ENCODE measurements at regions of chr1 and their contacts with region 1.

Region 1: DNA sequence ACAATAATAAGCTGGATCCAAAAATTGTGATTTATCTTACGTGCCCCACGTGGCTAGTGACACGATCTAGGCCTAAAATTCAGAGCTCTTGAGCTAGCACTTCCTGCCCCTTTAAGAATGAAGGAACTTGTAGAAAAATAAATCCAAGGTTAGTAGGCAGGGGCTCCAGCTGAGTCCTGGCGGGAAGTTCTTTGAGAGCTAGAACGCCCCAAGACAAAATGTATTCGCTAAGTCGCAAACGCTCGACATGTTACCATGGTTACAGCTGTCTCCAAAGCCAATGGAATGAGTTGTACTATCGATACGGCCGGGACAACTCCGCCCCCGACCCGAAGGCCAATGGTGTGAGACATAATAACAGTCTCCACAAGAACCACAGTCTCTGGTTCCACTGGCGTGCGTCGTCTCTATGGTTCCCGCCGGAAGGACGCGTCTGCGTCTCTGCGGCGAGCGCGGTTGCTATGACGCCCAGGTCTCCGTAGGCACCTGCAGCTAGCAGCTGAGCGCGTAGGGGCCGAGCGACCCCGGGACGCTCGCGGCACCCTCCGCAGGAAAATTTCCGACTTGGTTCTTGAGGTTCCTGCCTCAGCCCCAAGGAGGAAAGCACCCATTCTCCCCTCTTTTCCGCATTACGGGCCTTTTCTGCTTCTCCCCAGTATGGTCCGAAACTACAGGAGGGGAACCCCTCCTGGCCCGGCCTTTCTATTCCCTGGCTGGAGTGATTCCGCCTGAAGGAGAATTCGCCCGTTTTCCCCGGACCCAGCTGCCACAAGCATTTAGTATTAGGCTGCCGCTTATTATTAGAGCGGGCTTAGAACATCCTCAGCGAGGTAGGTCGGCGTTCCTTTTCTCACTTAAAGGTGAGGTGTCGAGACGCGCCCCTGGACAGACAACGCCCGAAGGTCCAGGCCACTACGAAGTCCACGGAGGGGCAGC is at the start of gene CCDC30:
- DNase-seq: peak; percentile 94 to 95
- ATAC-seq: peak; percentile 100
- H3K4me3 ChIP-seq: peak within 1 kb of the TSS; percentile 61 to 79 (median 70)
- H3K27ac ChIP-seq: no peak within 1 kb of the TSS
- H3K4me1 ChIP-seq: peaks cover 14 to 16% of the 10 kb centered on the region in 2 donors
- H3K27me3 ChIP-seq: no peaks in the 10 kb centered on the region
- CTCF ChIP-seq: no peak
- POLR2A ChIP-seq: no peak
- total RNA-seq, gene CCDC30: 0.24 to 2.9 (median 0.74) TPM

Region 2: GRCh38 chr1:42186152-42186551 is 276.9 kb before region 1 on chr1:
- in situ Hi-C with region 1: no loop called
- intact Hi-C with region 1: no loop called
- DNase-seq: no peak
- ATAC-seq: no peak
- H3K4me3 ChIP-seq: no peak overlapping the region
- H3K27ac ChIP-seq: no peak overlapping the region
- H3K4me1 ChIP-seq: no peaks in the 10 kb centered on the region
- H3K27me3 ChIP-seq: no peaks in the 10 kb centered on the region
- CTCF ChIP-seq: no peak
- POLR2A ChIP-seq: no peak

Region 3: DNA sequence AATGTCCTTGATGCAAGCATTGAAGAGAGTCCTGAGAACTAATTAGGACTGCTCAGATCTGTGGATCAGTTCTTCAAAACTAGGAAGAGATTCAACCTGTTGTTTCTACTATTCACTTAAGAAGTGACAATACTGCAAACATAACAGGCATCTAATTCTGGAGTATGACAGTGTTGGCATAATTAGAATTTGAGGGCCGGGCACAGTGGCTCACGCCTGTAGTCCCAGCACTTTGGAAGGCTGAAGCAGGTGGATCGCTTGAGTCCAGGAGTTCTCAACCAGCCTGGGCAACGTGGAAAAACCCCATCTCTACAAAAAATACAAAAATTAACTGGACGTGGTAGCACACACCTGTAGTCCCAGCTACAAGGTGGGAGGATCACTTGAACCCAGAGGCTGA is 120.0 kb before region 1 on chr1:
- in situ Hi-C with region 1: no loop called
- intact Hi-C with region 1: loop called (anchors 1 kb)
- DNase-seq: no peak
- ATAC-seq: no peak
- H3K4me3 ChIP-seq: no peak overlapping the region
- H3K27ac ChIP-seq: no peak overlapping the region
- H3K4me1 ChIP-seq: no peaks in the 10 kb centered on the region
- H3K27me3 ChIP-seq: no peaks in the 10 kb centered on the region
- CTCF ChIP-seq: no peak
- POLR2A ChIP-seq: no peak

Region 4: GRCh38 chr1:42657971-42658879 is 195.1 kb after region 1 on chr1 and contains the start of gene PPIH:
- in situ Hi-C with region 1: no loop called
- intact Hi-C with region 1: loop called (anchors 2 kb)
- DNase-seq: peak; percentile 86 to 91
- ATAC-seq: peak; percentile 98 to 99
- H3K4me3 ChIP-seq: peak within 1 kb of the TSS; percentile 80 to 94 (median 89)
- H3K27ac ChIP-seq: peak within 1 kb of the TSS; percentile 82 to 92 (median 89)
- H3K4me1 ChIP-seq: peaks cover 14 to 15% of the 10 kb centered on the region in 2 donors
- H3K27me3 ChIP-seq: no peaks in the 10 kb centered on the region
- CTCF ChIP-seq: peak in 4 of 5 experiments; percentile 31 to 56 (median 47)
- POLR2A ChIP-seq: peak; percentile 50 to 58
- total RNA-seq, gene PPIH: 6.1 to 13.6 (median 7.1) TPM

Region 5: DNA sequence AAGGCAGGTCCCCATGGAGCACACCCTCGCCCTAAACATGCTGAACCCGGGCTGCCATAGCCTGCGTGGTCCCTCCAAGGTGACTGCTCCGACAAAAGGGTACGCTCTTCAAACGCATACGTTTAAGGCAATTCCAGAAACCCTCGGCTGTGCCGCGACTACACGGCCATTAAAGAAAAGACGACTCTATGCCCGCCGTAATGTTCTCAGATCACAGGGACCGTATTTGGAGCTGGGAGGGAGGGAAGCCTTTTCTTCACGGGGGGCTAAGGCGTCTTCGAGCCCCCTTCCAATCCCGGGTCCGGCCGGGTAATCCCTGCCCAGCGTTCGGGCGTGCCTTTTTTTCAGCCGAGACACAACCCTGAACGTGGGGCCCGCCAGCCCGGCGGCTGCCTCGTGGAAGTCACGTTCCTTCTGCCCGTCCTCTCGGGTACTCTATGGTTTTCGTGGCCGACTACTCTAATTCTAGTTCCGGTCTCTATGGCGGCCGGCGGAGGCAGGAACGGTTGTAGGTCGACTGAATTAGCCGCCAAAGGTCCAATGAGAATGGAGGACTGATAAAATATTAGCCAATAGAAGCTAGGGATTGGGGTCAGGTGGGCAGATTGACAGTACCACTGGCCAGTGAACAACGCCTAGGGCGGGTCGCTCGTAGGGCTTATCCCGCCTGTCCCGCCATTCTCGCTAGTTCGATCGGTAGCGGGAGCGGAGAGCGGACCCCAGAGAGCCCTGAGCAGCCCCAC is 218.8 kb after region 1 on chr1 and contains the start of gene YBX1:
- in situ Hi-C with region 1: no loop called
- intact Hi-C with region 1: loop called (anchors 10 kb)
- DNase-seq: peak; percentile 98 to 99
- ATAC-seq: peak; percentile 94 to 96
- H3K4me3 ChIP-seq: peak within 1 kb of the TSS; percentile 84 to 92 (median 86)
- H3K27ac ChIP-seq: peak within 1 kb of the TSS; percentile 97 to 98 (median 98)
- H3K4me1 ChIP-seq: peaks cover 43 to 44% of the 10 kb centered on the region in 2 donors
- H3K27me3 ChIP-seq: no peaks in the 10 kb centered on the region
- CTCF ChIP-seq: no peak
- POLR2A ChIP-seq: peak; percentile 89 to 95
- total RNA-seq, gene YBX1: 861 to 1,251 (median 1,022) TPM

Region 6: GRCh38 chr1:42816585-42817434 is 353.7 kb after region 1 on chr1 and contains the starts of genes ERMAP and SVBP:
- in situ Hi-C with region 1: no loop called
- intact Hi-C with region 1: loop called (anchors 2 kb)
- DNase-seq: peak; percentile 84 to 87
- ATAC-seq: peak; percentile 97
- H3K4me3 ChIP-seq: peak within 1 kb of the TSS; percentile 65 to 95 (median 76)
- H3K27ac ChIP-seq: peak within 1 kb of the TSS; percentile 88 to 100 (median 96)
- H3K4me1 ChIP-seq: peaks cover 2 to 20% of the 10 kb centered on the region in 2 donors
- H3K27me3 ChIP-seq: no peaks in the 10 kb centered on the region
- CTCF ChIP-seq: no peak
- POLR2A ChIP-seq: no peak
- total RNA-seq, gene ERMAP: 1.4 to 6.5 (median 3.9) TPM
- total RNA-seq, gene SVBP: 15.5 to 26.4 (median 24.9) TPM

Measured in gastrocnemius medialis (tissue), 4 donors.